ENCODE measurements at regions of chr7 and their contacts with region 1.

Region 1: GRCh38 chr7:149261829-149262617 is at the start of gene ZNF783:
- DNase-seq: peak; percentile 73
- H3K4me3 ChIP-seq: peak within 1 kb of the TSS; percentile 60
- H3K27ac ChIP-seq: peak within 1 kb of the TSS; percentile 86
- H3K27me3 ChIP-seq: no peaks in the 10 kb centered on the region
- CTCF ChIP-seq: peak; percentile 54
- polyA plus RNA-seq, gene ZNF783: 5.2 TPM in 2 replicates

Region 2: DNA sequence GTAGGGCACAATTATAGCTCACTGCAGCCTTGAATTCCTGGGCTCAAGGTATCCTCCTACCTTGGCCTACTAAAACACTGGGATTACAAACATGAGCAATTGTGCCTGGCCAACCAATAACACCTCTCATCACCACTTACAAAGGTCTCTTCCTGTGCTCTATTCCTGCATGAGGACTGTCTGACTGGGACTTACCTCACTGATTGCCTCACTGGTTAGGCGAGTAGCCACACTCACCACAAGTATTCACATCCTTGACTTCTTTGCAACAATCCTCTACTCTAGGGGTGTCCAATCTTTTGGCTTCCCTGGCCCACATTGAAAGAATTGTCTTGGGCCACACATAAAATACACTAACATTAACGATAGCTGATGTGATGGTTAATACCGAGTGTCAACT is 211.1 kb before region 1 on chr7:
- CTCF ChIA-PET with region 1: interaction called, 16 read pairs
- POLR2A ChIA-PET with region 1: no interaction called
- DNase-seq: no peak
- H3K4me3 ChIP-seq: no peak overlapping the region
- H3K27ac ChIP-seq: no peak overlapping the region
- H3K27me3 ChIP-seq: peaks cover 3% of the 10 kb centered on the region
- CTCF ChIP-seq: no peak

Region 3: DNA sequence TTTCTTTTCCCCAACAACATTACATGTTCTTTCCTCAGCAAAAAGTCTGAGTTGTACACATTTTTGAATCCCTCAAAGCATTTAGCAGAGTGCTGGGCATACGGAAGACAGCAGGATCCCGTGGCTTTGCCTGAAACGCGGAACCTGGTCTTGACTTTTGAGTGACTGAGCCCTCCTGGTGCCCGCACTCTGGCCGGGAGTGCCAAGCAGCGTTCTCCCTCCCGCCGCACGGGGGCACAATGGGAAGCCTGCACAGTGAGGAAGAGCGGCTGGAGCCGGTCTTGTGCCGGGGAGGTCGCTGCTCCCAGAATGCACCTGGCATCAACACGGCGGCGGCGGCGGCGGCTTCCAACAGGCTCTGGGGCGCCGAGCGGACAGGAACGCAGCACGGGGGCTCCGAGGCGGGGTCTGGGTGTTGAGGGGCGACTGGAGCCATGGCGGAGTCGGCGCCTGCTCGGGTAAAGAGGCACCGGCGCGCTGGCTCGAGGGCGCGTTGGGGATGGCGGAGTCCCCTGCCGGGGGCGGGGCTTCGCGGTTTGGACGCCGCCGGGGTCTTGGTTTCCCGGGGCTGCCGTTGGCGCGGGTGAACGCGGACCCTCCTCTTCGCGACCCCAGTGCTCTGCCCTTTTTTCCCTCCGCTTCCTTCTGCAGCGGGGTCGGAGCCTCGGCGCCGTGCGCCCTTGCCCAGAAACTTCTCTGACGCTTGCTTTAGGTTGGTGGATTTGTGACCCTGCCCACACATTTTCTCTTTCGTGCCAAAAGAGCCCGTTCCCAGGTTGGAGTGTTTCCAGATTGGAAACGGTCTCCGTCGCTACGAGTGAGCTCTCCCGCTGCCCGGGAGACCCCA is 22.5 kb before region 1 on chr7 and contains the start of gene ZNF212:
- CTCF ChIA-PET with region 1: interaction called, 17 read pairs
- POLR2A ChIA-PET with region 1: interaction called, 6 read pairs
- DNase-seq: peak; percentile 58
- H3K4me3 ChIP-seq: peak within 1 kb of the TSS; percentile 97
- H3K27ac ChIP-seq: no peak within 1 kb of the TSS
- H3K27me3 ChIP-seq: no peaks in the 10 kb centered on the region
- CTCF ChIP-seq: peak; percentile 83
- polyA plus RNA-seq, gene ZNF212: 4.1 and 4.2 TPM in 2 replicates

Region 4: DNA sequence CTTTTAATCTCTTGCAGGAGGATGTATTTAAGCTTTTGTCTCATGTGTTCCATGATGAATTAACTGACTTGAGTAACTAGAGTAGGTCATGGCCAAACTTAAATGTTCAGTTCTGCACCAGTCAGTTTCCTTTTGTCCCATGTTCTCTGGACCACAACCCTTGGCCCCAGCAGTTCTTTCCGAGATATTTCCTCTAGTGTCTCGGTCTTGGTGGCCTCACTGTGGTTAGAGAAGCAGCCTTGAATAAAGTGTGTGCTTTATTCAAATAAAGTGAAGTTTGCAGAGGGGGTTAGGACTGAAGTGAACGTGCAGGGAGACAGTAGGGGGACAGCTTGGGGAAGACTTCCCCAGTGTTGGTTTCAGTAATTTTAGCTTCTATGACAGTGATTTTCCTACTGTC is 13.2 kb before region 1 on chr7:
- CTCF ChIA-PET with region 1: interaction called, 64 read pairs
- POLR2A ChIA-PET with region 1: interaction called, 7 read pairs
- DNase-seq: no peak
- H3K4me3 ChIP-seq: no peak overlapping the region
- H3K27ac ChIP-seq: no peak overlapping the region
- H3K27me3 ChIP-seq: no peaks in the 10 kb centered on the region
- CTCF ChIP-seq: no peak

Region 5: GRCh38 chr7:149284850-149285626 is 23.0 kb after region 1 on chr7:
- CTCF ChIA-PET with region 1: interaction called, 9 read pairs
- POLR2A ChIA-PET with region 1: interaction called, 17 read pairs
- DNase-seq: peak; percentile 62
- H3K4me3 ChIP-seq: peak overlapping the region; percentile 74
- H3K27ac ChIP-seq: no peak overlapping the region
- H3K27me3 ChIP-seq: no peaks in the 10 kb centered on the region
- CTCF ChIP-seq: no peak

Region 6: GRCh38 chr7:149291036-149291780 is 29.2 kb after region 1 on chr7:
- CTCF ChIA-PET with region 1: interaction called, 9 read pairs
- POLR2A ChIA-PET with region 1: interaction called, 11 read pairs
- DNase-seq: no peak
- H3K4me3 ChIP-seq: no peak overlapping the region
- H3K27ac ChIP-seq: no peak overlapping the region
- H3K27me3 ChIP-seq: no peaks in the 10 kb centered on the region
- CTCF ChIP-seq: no peak

Region 7: GRCh38 chr7:149456481-149457421 is 194.7 kb after region 1 on chr7:
- CTCF ChIA-PET with region 1: no interaction called
- POLR2A ChIA-PET with region 1: no interaction called
- DNase-seq: no peak
- H3K4me3 ChIP-seq: no peak overlapping the region
- H3K27ac ChIP-seq: no peak overlapping the region
- H3K27me3 ChIP-seq: no peaks in the 10 kb centered on the region
- CTCF ChIP-seq: no peak

Region 8: GRCh38 chr7:150335108-150335773 is 1073.2 kb after region 1 on chr7:
- CTCF ChIA-PET with region 1: no interaction called
- POLR2A ChIA-PET with region 1: no interaction called
- DNase-seq: peak; percentile 83
- H3K4me3 ChIP-seq: no peak overlapping the region
- H3K27ac ChIP-seq: peak overlapping the region; percentile 77
- H3K27me3 ChIP-seq: peaks cover 4% of the 10 kb centered on the region
- CTCF ChIP-seq: no peak

Measured in AG04450 (cell line).